ENCODE measurements at regions of chr1 and their contacts with region 1.

Region 1: GRCh38 chr1:156445789-156446263 is 54.7 kb downstream of the MEF2D start:
- DNase-seq: peak; percentile 83
- ATAC-seq: peak; percentile 79
- H3K4me3 Mint-ChIP-seq: no peak overlapping the region
- H3K27ac Mint-ChIP-seq: no peak overlapping the region
- H3K4me1 Mint-ChIP-seq: peaks cover 7% of the 10 kb centered on the region
- H3K27me3 Mint-ChIP-seq: peaks cover 56% of the 10 kb centered on the region

Region 2: GRCh38 chr1:156385534-156386031 is 60.2 kb before region 1 on chr1:
- POLR2A ChIA-PET with region 1: interaction called, 18 read pairs
- DNase-seq: peak; percentile 74
- ATAC-seq: peak; percentile 86
- H3K4me3 Mint-ChIP-seq: no peak overlapping the region
- H3K27ac Mint-ChIP-seq: no peak overlapping the region
- H3K4me1 Mint-ChIP-seq: peaks cover 5% of the 10 kb centered on the region
- H3K27me3 Mint-ChIP-seq: peaks cover 40% of the 10 kb centered on the region

Region 3: DNA sequence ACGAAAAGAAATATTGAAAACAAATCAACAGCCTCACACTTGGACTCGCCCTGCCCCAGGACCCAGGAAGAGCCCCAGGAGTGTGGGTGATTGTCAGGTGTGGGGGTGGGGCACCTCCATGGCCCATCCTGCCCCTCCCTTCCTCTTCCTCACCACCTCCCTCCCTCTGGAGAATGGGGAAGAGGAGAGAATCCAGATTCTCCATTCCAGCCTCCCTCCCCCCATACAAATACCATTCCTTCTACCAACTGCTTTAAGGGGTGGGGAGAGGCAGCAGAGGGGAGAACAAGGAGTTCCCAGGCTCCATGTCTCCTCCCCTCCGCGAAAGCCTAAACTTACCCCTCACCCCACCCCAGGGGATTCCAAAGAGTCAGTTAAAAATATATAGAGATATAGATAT is 18.0 kb after region 1 on chr1:
- POLR2A ChIA-PET with region 1: no interaction called
- DNase-seq: no peak
- ATAC-seq: no peak
- H3K4me3 Mint-ChIP-seq: no peak overlapping the region
- H3K27ac Mint-ChIP-seq: no peak overlapping the region
- H3K4me1 Mint-ChIP-seq: peaks cover 16% of the 10 kb centered on the region
- H3K27me3 Mint-ChIP-seq: no peaks in the 10 kb centered on the region